ENCODE measurements at regions of chr6 and their contacts with region 1.

Region 1: GRCh38 chr6:44409207-44409794 is 21.8 kb downstream of the CDC5L start:
- DNase-seq: no peak
- ATAC-seq: peak; percentile 35
- H3K4me3 Mint-ChIP-seq: no peak overlapping the region
- H3K27ac Mint-ChIP-seq: peak overlapping the region; percentile 9
- H3K4me1 Mint-ChIP-seq: peaks cover 40% of the 10 kb centered on the region
- H3K27me3 Mint-ChIP-seq: no peaks in the 10 kb centered on the region

Region 2: GRCh38 chr6:44192428-44193041 is 216.8 kb before region 1 on chr6:
- CTCF ChIA-PET with region 1: no interaction called
- POLR2A ChIA-PET with region 1: no interaction called
- intact Hi-C with region 1: no loop called
- DNase-seq: no peak
- ATAC-seq: no peak
- H3K4me3 Mint-ChIP-seq: no peak overlapping the region
- H3K27ac Mint-ChIP-seq: no peak overlapping the region
- H3K4me1 Mint-ChIP-seq: peaks cover 18% of the 10 kb centered on the region
- H3K27me3 Mint-ChIP-seq: peaks cover 7% of the 10 kb centered on the region

Region 3: DNA sequence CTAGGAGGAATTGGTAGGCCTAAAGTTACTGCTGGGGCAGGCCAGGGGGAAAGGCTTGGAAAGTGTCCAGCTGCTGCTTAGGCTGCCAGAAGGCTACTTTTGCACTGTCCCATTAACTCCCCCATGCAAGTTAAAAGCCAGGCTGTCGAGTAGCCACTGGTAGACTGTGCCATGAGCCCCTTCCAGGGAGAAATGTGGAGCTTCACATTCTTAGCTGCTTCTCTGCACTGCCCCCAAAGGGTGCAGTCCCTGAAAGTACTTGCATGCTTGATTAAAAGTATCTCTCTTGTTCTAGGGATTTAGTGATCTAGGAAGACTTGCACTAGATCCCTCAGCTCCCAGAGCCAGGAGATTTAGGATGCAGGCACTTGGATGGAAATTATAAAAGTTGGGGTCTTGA is 35.6 kb after region 1 on chr6:
- CTCF ChIA-PET with region 1: no interaction called
- POLR2A ChIA-PET with region 1: no interaction called
- intact Hi-C with region 1: no loop called
- DNase-seq: no peak
- ATAC-seq: no peak
- H3K4me3 Mint-ChIP-seq: no peak overlapping the region
- H3K27ac Mint-ChIP-seq: no peak overlapping the region
- H3K4me1 Mint-ChIP-seq: peaks cover 1% of the 10 kb centered on the region
- H3K27me3 Mint-ChIP-seq: no peaks in the 10 kb centered on the region

Region 4: GRCh38 chr6:44556046-44556445 is 146.7 kb after region 1 on chr6:
- CTCF ChIA-PET with region 1: no interaction called
- POLR2A ChIA-PET with region 1: no interaction called
- intact Hi-C with region 1: no loop called
- DNase-seq: no peak
- ATAC-seq: no peak
- H3K4me3 Mint-ChIP-seq: no peak overlapping the region
- H3K27ac Mint-ChIP-seq: no peak overlapping the region
- H3K4me1 Mint-ChIP-seq: no peaks in the 10 kb centered on the region
- H3K27me3 Mint-ChIP-seq: peaks cover 19% of the 10 kb centered on the region

Region 5: DNA sequence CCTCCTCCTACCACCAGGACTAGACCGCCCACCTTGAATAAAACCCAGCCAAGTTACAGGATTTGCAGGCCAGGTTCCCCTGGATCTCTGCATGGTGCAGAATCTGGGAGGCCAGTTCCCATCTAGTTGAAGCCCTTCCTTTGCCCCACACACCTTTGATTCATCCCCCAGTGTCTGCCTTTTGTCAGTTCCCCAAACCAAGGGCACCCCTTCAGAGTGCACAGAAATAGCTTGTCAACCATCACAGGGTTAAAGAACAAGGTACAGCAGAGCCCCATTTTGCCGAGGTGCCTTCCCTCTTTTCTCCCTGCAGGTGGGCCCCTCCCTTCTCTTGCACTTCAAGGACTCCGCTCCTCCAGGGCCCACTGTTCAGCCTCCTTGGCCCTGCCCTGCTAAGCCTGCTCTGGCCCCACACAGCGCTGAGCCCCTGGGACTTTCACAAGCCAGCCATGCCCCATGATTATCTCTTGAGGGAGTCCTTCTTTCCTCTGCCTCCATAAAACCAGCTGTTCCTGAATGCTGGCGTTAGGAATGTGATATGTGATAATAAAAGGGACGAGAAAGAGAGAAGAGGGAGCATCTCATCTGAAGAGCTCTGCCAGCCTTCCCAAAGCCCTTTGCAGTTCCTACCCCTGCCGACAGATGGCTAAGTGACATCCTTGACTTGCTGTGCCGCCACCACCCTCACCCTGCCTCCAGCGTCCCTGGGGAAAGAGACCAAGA is 258.5 kb after region 1 on chr6:
- CTCF ChIA-PET with region 1: no interaction called
- POLR2A ChIA-PET with region 1: no interaction called
- intact Hi-C with region 1: no loop called
- DNase-seq: peak; percentile 63
- ATAC-seq: no peak
- H3K4me3 Mint-ChIP-seq: no peak overlapping the region
- H3K27ac Mint-ChIP-seq: no peak overlapping the region
- H3K4me1 Mint-ChIP-seq: no peaks in the 10 kb centered on the region
- H3K27me3 Mint-ChIP-seq: no peaks in the 10 kb centered on the region

Region 6: GRCh38 chr6:44849806-44850205 is 440.5 kb after region 1 on chr6:
- CTCF ChIA-PET with region 1: no interaction called
- POLR2A ChIA-PET with region 1: interaction called, 12 read pairs
- intact Hi-C with region 1: no loop called
- DNase-seq: no peak
- ATAC-seq: no peak
- H3K4me3 Mint-ChIP-seq: no peak overlapping the region
- H3K27ac Mint-ChIP-seq: no peak overlapping the region
- H3K4me1 Mint-ChIP-seq: no peaks in the 10 kb centered on the region
- H3K27me3 Mint-ChIP-seq: no peaks in the 10 kb centered on the region